ENCODE measurements at regions of chr3 and their contacts with region 1.

Region 1: GRCh38 chr3:69260216-69260787 is 125.6 kb downstream of the FRMD4B start:
- DNase-seq: no peak
- H3K4me3 ChIP-seq: no peak overlapping the region
- H3K27ac ChIP-seq: no peak overlapping the region
- H3K4me1 ChIP-seq: no peaks in the 10 kb centered on the region
- H3K27me3 ChIP-seq: no peaks in the 10 kb centered on the region
- CTCF ChIP-seq: no peak
- POLR2A ChIP-seq: no peak

Region 2: DNA sequence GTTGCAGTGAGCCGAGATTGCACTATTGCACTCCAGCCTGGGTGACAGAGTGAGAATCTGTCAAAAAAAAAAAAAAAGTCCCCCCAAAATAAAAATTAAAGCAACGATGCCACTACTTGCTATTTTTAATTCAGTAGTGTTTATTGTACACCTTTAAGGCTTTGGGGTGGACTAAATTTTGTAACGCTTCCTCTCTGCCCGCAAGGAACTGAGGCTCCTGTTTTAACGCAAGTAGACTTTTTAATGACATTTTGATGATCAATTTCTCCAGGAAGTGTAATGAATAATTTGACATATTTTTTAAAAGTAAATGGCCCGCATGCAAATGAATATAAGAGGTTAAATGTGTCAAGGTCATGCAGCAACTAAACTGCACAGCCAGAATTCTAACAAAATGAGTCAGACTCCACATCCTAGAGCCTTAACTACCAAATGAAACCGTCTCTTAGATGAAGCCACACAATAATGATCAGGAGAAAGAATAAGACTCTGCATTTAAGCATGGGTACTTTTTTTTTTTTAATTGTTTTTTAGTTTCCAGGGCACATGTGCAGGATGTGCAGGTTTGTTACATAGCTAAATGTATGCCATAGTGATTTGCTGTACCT is 41.1 kb before region 1 on chr3:
- CTCF ChIA-PET with region 1: no interaction called
- POLR2A ChIA-PET with region 1: no interaction called
- dilution Hi-C with region 1: no loop called
- intact Hi-C with region 1: no loop called
- DNase-seq: peak; percentile 45
- H3K4me3 ChIP-seq: no peak overlapping the region
- H3K27ac ChIP-seq: no peak overlapping the region
- H3K4me1 ChIP-seq: peaks cover 17% of the 10 kb centered on the region
- H3K27me3 ChIP-seq: no peaks in the 10 kb centered on the region
- CTCF ChIP-seq: no peak
- POLR2A ChIP-seq: no peak

Region 3: GRCh38 chr3:69248436-69248835 is 11.9 kb before region 1 on chr3:
- CTCF ChIA-PET with region 1: no interaction called
- POLR2A ChIA-PET with region 1: interaction called, 13 read pairs
- dilution Hi-C with region 1: no loop called
- intact Hi-C with region 1: no loop called
- DNase-seq: no peak
- H3K4me3 ChIP-seq: no peak overlapping the region
- H3K27ac ChIP-seq: no peak overlapping the region
- H3K4me1 ChIP-seq: peaks cover 4% of the 10 kb centered on the region
- H3K27me3 ChIP-seq: no peaks in the 10 kb centered on the region
- CTCF ChIP-seq: no peak
- POLR2A ChIP-seq: no peak

Region 4: DNA sequence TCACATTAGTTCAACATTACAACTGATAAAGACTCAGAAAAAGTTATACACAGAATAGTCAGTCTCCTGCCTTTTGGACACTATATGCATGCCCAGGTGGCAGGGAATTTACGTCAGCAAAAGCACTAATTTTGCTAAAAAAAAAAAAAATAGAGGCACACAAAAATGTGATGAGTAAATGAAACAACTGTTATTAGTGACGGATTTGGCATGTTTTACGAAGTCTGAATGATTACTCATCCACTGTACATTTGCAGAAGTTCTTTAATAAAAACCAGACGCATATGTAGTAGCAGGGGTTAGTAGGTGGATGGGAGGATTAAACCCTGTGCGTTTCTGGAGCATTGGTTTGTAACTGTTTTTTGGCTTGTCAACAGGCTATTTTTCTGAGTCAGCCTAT is 577.9 kb after region 1 on chr3:
- CTCF ChIA-PET with region 1: no interaction called
- POLR2A ChIA-PET with region 1: no interaction called
- dilution Hi-C with region 1: no loop called
- intact Hi-C with region 1: no loop called
- DNase-seq: no peak
- H3K4me3 ChIP-seq: no peak overlapping the region
- H3K27ac ChIP-seq: no peak overlapping the region
- H3K4me1 ChIP-seq: no peaks in the 10 kb centered on the region
- H3K27me3 ChIP-seq: no peaks in the 10 kb centered on the region
- CTCF ChIP-seq: no peak
- POLR2A ChIP-seq: no peak